ENCODE measurements at regions of chr17 and their contacts with region 1.

Region 1: GRCh38 chr17:57408071-57408811 is 151.9 kb downstream of the MSI2 start:
- DNase-seq: no peak

Region 2: DNA sequence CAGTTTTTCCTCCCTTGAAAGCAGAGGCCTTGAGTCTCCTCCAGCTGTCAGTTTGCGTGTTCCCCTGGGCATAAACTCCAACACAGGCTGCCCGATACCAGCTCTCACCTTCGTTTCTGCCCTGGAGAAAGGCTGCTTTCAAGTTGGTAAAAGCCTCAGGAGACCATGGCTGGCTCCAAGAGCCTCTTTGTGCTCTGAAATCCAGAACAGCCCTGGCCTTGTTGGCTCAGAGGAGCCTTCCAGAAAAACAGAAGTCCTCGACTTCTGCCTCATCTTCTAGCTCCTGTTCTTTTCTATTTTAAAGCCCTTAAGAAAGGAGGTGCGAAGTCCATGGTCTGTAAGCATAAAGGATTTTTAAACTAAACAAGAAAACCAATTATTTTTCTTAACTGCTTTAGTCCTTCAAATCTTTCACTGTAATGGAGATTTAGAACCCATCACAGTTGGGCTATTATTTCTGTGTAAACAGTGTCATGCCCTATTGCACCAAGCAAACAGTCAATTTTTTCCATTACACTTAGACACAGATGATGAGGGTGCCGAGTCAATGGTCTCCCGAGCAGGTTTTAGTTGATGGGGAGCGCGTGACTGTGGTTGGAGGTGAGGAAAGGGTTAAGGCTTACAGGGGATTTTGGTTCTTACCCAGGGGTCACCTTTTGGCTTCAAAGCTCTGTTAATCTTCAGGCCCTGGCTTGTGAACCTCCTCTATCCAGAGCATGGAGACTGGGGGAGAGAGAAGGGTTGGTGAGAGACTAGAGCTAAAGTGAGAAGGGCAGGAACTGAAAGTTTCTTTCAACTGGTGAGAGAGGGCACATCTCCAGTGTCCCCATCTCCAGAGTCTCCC is 60.9 kb after region 1 on chr17:
- in situ Hi-C with region 1: no loop called
- DNase-seq: no peak

Region 3: GRCh38 chr17:57486873-57487301 is 78.6 kb after region 1 on chr17:
- in situ Hi-C with region 1: loop called (anchors 5 kb)
- DNase-seq: peak; percentile 94

Measured in G401 (cell line).